Activated CD4-positive, alpha-beta memory T cell treated with anti-CD3 and anti-CD28 coated beads for 36 hours (primary cell): ENCODE measurements at regions of chr1 and their contacts with region 1.

Region 1: DNA sequence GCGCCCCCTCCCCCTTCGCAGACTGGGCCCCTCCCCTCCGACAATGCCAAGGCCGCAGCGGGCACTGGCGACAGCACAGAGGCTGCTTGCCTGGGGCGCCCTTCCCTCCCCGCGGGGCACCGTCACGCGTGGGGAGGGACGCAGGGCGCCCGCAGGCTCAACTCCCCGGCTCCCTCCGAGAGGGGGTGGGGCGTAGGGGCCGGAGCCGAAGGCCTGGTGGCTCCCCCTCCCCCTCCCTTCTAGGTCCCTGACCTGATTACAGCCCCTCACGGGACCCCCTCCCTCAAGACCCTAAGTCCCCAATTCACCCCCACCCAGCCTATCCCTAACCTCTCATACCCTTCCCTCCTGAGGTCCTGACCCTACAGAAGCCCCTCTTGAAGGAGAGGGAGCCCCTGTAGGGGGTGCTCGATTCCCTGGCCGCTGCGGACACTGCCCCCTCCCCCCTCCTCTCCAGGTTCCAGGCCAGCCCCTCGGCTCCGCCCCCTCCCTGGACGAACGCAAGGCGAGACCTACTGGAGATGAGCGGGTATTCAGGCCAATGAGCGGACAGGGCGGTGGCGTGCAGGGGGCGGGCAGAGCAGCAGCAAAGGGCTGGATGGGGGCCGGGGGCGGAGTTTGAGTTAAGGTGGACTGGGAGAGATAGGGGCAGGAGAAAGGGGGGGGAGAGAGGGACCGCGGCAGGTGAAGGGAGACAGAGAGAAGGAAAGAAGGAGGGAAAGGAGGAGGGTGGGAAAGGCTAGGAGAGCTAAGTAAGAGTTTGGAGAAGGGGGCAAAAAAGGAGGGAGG is 733 bp upstream of the ZBTB7B start:
- DNase-seq: peak; percentile 100
- H3K4me3 Mint-ChIP-seq: peak overlapping the region; percentile 94
- H3K27ac Mint-ChIP-seq: peak overlapping the region; percentile 95
- H3K4me1 Mint-ChIP-seq: peaks cover 50% of the 10 kb centered on the region
- H3K27me3 Mint-ChIP-seq: no peaks in the 10 kb centered on the region

Region 2: DNA sequence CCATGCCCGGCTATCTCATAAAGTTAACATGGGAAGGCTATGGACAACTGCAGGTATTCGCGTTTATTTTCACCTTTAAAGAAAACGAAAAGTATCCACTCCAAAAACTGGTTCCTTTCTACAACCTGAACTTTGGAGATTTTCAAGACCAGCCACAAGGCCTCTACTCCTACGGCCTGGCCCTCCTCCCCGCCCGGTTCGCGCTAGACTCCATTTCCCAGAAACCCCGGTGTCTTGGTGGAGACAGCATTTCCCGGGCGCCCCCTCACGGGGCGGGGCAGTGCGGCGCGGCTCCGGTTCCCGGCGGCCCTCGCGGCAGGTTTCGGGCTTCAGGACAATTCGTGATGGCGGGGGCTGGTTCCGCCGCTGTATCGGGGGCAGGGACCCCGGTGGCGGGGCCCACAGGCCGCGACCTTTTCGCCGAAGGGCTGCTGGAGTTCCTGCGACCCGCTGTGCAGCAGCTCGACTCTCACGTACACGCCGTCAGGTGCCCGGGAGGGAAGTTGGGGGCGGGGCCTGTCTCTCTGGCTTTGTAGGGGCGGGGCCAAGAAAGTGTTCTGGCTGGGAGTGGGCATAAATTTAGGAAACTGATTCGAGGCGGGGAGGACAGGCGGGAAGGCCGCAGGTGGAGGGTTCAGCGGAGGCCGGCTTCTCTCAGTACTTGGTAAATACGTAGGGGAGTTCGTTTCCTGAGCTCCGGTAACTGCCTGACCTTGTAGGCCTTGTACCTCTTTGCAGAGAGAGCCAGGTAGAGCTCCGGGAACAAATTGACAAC is 1343.3 kb before region 1 on chr1 and contains the start of gene SNAPIN:
- CTCF ChIA-PET with region 1: no interaction called
- POLR2A ChIA-PET with region 1: no interaction called
- intact Hi-C with region 1: loop called (anchors 10 kb)
- DNase-seq: peak; percentile 95
- H3K4me3 Mint-ChIP-seq: peak within 1 kb of the TSS; percentile 93
- H3K27ac Mint-ChIP-seq: peak within 1 kb of the TSS; percentile 82
- H3K4me1 Mint-ChIP-seq: peaks cover 17% of the 10 kb centered on the region
- H3K27me3 Mint-ChIP-seq: no peaks in the 10 kb centered on the region
- total RNA-seq, gene SNAPIN: 31.3 to 32.1 TPM

Region 3: GRCh38 chr1:154936555-154937084 is 65.2 kb before region 1 on chr1 and contains the start of gene PMVK:
- CTCF ChIA-PET with region 1: interaction called, 17 read pairs
- POLR2A ChIA-PET with region 1: no interaction called
- intact Hi-C with region 1: loop called (anchors 1 kb)
- DNase-seq: peak; percentile 96
- H3K4me3 Mint-ChIP-seq: peak within 1 kb of the TSS; percentile 90
- H3K27ac Mint-ChIP-seq: peak within 1 kb of the TSS; percentile 96
- H3K4me1 Mint-ChIP-seq: peaks cover 55% of the 10 kb centered on the region
- H3K27me3 Mint-ChIP-seq: no peaks in the 10 kb centered on the region
- total RNA-seq, gene PMVK: 51.2 to 54.0 TPM

Region 4: GRCh38 chr1:154974063-154974807 is 27.6 kb before region 1 on chr1 and contains the start of gene CKS1B:
- CTCF ChIA-PET with region 1: interaction called, 80 read pairs
- POLR2A ChIA-PET with region 1: interaction called, 19 read pairs
- intact Hi-C with region 1: loop called (anchors 1 kb)
- DNase-seq: peak; percentile 98
- H3K4me3 Mint-ChIP-seq: no peak within 1 kb of the TSS
- H3K27ac Mint-ChIP-seq: no peak within 1 kb of the TSS
- H3K4me1 Mint-ChIP-seq: peaks cover 30% of the 10 kb centered on the region
- H3K27me3 Mint-ChIP-seq: no peaks in the 10 kb centered on the region
- total RNA-seq, gene CKS1B: 197 to 205 TPM

Region 5: DNA sequence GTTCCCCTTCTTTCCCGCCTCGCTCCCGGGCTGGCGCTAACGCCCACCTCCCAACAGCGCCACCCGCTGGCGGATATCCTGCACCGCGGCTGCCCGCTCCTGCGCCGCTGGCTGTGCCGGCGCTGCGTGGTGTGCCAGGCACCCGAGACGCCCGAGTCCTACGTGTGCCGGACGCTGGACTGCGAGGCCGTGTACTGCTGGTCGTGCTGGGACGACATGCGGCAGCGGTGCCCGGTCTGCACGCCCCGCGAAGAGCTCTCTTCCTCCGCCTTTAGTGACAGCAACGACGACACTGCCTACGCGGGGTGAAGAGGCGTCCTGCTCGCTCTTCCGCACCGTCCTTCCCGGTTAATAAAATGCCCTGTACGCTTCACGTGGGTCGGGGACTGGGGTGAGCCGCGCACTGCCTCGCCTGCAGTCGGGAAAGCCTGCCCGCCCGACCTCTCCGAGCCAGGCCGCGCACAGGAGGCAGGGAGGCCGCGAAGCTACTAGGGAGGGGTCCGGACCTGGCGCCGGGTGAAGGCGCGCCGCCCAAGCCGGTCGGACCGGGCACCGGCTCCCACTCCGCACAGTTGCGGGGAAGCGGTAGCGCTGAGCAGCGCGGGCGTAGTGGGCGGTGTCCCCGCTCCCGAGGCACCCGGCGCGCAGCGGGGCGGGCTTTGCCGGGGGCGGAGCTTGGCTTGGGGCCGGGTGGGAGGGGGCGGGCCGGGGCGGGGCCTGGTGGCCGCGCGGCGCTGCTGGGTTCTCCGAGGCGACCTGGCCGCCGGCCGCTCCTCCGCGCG is 48.9 kb after region 1 on chr1 and contains the start of gene ADAM15:
- CTCF ChIA-PET with region 1: interaction called, 9 read pairs
- POLR2A ChIA-PET with region 1: no interaction called
- intact Hi-C with region 1: loop called (anchors 2 kb)
- DNase-seq: peak; percentile 87
- H3K4me3 Mint-ChIP-seq: peak within 1 kb of the TSS; percentile 81
- H3K27ac Mint-ChIP-seq: peak within 1 kb of the TSS; percentile 64
- H3K4me1 Mint-ChIP-seq: peaks cover 22% of the 10 kb centered on the region
- H3K27me3 Mint-ChIP-seq: no peaks in the 10 kb centered on the region
- total RNA-seq, gene ADAM15: 54.3 to 60.5 TPM

Region 6: DNA sequence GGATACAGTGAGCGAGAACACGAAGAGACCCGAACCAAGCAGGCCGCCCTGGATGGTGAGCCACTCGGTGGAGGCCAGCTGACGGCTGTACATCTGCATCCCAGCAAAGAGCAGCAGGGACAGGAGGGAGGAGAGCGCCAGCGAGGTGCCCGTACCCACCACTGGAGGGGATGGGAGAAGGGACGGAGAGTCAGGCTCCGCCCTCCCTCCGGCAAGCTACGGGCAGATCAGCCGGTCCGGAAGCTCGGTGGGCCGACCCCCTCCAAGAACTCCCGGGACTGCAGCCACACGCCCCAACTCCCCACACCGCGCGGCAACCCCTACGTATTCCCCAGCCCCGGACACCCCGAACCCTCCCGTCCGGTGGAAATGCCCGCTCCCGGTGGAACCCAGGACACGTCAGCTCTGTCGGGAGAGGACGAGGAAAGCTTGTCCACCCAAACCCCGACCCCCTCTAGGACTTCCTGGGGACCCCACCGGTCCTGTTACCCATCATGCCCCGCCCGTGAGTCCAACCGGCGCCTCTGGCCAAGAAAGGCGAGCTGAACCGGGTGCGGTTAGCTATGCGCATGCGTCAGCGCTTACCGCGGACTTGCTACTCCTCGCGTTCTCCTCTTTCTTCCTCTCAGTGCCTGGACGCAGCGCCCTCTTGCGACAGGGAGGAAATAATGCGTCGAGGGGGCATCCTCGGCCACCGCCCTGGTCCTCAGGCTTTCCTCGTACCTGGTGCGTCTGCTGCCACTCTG is 171.0 kb after region 1 on chr1 and contains the start of gene KRTCAP2:
- CTCF ChIA-PET with region 1: interaction called, 5 read pairs
- POLR2A ChIA-PET with region 1: no interaction called
- intact Hi-C with region 1: loop called (anchors 5 kb)
- DNase-seq: peak; percentile 98
- H3K4me3 Mint-ChIP-seq: peak within 1 kb of the TSS; percentile 93
- H3K27ac Mint-ChIP-seq: peak within 1 kb of the TSS; percentile 96
- H3K4me1 Mint-ChIP-seq: peaks cover 48% of the 10 kb centered on the region
- H3K27me3 Mint-ChIP-seq: no peaks in the 10 kb centered on the region
- total RNA-seq, gene KRTCAP2: 138 to 146 TPM